CD8-positive, alpha-beta T cell (primary cell): ENCODE measurements at regions of chr11 and their contacts with region 1.

Region 1: GRCh38 chr11:45885274-45885920 is at the start of gene MAPK8IP1:
- DNase-seq: peak; percentile 14 to 76 (median 52)
- ATAC-seq: peak; percentile 85
- H3K4me3 ChIP-seq: peak within 1 kb of the TSS in 1 of 2 experiments; percentile 24
- H3K4me3 Mint-ChIP-seq: peak within 1 kb of the TSS; percentile 61
- H3K27ac ChIP-seq: no peak within 1 kb of the TSS
- H3K27ac Mint-ChIP-seq: no peak within 1 kb of the TSS
- H3K4me1 ChIP-seq: peaks cover 5% of the 10 kb centered on the region
- H3K4me1 Mint-ChIP-seq: peaks cover 10% of the 10 kb centered on the region
- H3K27me3 ChIP-seq: peaks cover 0 to 9% of the 10 kb centered on the region in 2 experiments
- H3K27me3 Mint-ChIP-seq: peaks cover 2% of the 10 kb centered on the region
- CTCF ChIP-seq: no peak
- total RNA-seq, gene MAPK8IP1: 6.5 to 8.4 TPM

Region 2: GRCh38 chr11:45468262-45468856 is 417.0 kb before region 1 on chr11:
- CTCF ChIA-PET with region 1: no interaction called
- POLR2A ChIA-PET with region 1: no interaction called
- intact Hi-C with region 1: no loop called
- DNase-seq: no peak
- ATAC-seq: no peak
- H3K4me3 ChIP-seq: no peak overlapping the region
- H3K4me3 Mint-ChIP-seq: no peak overlapping the region
- H3K27ac ChIP-seq: no peak overlapping the region
- H3K27ac Mint-ChIP-seq: no peak overlapping the region
- H3K4me1 ChIP-seq: no peaks in the 10 kb centered on the region
- H3K4me1 Mint-ChIP-seq: no peaks in the 10 kb centered on the region
- H3K27me3 ChIP-seq: no peaks in the 10 kb centered on the region
- H3K27me3 Mint-ChIP-seq: peaks cover under 1% of the 10 kb centered on the region
- CTCF ChIP-seq: no peak

Region 3: GRCh38 chr11:45804761-45805304 is 80.6 kb before region 1 on chr11 and contains the start of gene SLC35C1:
- CTCF ChIA-PET with region 1: no interaction called
- POLR2A ChIA-PET with region 1: no interaction called
- intact Hi-C with region 1: loop called in 1 of 2 experiments (anchors 1 kb)
- DNase-seq: peak; percentile 89 to 98 (median 97)
- ATAC-seq: peak; percentile 96
- H3K4me3 ChIP-seq: peak within 1 kb of the TSS; percentile 97
- H3K4me3 Mint-ChIP-seq: peak within 1 kb of the TSS; percentile 90
- H3K27ac ChIP-seq: peak within 1 kb of the TSS; percentile 76 to 81
- H3K27ac Mint-ChIP-seq: peak within 1 kb of the TSS; percentile 81
- H3K4me1 ChIP-seq: peaks cover 32% of the 10 kb centered on the region
- H3K4me1 Mint-ChIP-seq: peaks cover 44% of the 10 kb centered on the region
- H3K27me3 ChIP-seq: no peaks in the 10 kb centered on the region
- H3K27me3 Mint-ChIP-seq: no peaks in the 10 kb centered on the region
- CTCF ChIP-seq: no peak
- total RNA-seq, gene SLC35C1: 3.1 to 3.3 TPM

Region 4: GRCh38 chr11:45859661-45860140 is 25.7 kb before region 1 on chr11:
- CTCF ChIA-PET with region 1: no interaction called
- POLR2A ChIA-PET with region 1: no interaction called
- intact Hi-C with region 1: no loop called
- DNase-seq: no peak
- ATAC-seq: no peak
- H3K4me3 ChIP-seq: no peak overlapping the region
- H3K4me3 Mint-ChIP-seq: no peak overlapping the region
- H3K27ac ChIP-seq: no peak overlapping the region
- H3K27ac Mint-ChIP-seq: no peak overlapping the region
- H3K4me1 ChIP-seq: no peaks in the 10 kb centered on the region
- H3K4me1 Mint-ChIP-seq: peaks cover 6% of the 10 kb centered on the region
- H3K27me3 ChIP-seq: no peaks in the 10 kb centered on the region
- H3K27me3 Mint-ChIP-seq: no peaks in the 10 kb centered on the region
- CTCF ChIP-seq: no peak

Region 5: DNA sequence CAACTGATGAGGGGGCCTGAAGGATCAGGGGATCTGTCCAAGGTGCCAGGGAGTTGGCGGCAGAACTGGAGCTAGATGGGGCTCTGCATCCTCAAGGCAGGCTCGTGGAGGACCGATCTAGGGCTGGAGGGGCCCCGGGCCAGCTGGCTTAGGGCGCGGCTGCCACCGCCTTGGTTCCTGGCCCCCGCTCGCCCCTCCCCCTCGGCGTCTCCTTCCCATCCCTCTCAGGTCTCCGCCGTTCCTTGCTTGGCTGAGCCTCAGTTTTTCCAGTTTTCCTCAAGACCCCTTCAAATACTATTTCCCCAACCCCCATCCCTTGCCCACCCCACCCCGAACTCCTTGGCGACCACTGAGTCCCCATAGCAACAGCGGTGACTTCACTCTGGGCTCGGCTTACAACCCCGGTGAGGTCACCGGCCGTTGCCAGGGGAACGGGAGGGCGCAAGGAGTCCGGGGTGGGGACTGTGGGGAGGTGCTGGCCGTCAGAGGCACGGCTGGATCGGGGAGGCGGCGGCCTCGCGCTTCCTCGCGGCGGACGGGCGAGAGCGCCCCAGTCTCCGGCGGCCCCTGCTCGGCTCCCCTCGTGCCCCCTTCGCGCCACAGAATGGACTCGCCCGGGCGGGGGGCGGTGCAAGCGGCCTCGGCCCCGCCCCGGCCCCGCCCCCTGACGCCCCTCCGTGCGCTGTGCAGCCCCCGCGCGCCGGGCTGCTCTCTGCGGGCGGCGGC is 14.2 kb after region 1 on chr11:
- CTCF ChIA-PET with region 1: no interaction called
- POLR2A ChIA-PET with region 1: interaction called, 3 read pairs
- intact Hi-C with region 1: loop called (anchors 1 kb)
- DNase-seq: peak; percentile 31 to 88 (median 63)
- ATAC-seq: peak; percentile 79
- H3K4me3 ChIP-seq: peak overlapping the region; percentile 27 to 53
- H3K4me3 Mint-ChIP-seq: peak overlapping the region; percentile 69
- H3K27ac ChIP-seq: peak overlapping the region in 1 of 2 experiments; percentile 30
- H3K27ac Mint-ChIP-seq: no peak overlapping the region
- H3K4me1 ChIP-seq: peaks cover 9% of the 10 kb centered on the region
- H3K4me1 Mint-ChIP-seq: peaks cover 8% of the 10 kb centered on the region
- H3K27me3 ChIP-seq: peaks cover 6 to 22% of the 10 kb centered on the region in 2 experiments
- H3K27me3 Mint-ChIP-seq: peaks cover 11% of the 10 kb centered on the region
- CTCF ChIP-seq: no peak

Region 6: DNA sequence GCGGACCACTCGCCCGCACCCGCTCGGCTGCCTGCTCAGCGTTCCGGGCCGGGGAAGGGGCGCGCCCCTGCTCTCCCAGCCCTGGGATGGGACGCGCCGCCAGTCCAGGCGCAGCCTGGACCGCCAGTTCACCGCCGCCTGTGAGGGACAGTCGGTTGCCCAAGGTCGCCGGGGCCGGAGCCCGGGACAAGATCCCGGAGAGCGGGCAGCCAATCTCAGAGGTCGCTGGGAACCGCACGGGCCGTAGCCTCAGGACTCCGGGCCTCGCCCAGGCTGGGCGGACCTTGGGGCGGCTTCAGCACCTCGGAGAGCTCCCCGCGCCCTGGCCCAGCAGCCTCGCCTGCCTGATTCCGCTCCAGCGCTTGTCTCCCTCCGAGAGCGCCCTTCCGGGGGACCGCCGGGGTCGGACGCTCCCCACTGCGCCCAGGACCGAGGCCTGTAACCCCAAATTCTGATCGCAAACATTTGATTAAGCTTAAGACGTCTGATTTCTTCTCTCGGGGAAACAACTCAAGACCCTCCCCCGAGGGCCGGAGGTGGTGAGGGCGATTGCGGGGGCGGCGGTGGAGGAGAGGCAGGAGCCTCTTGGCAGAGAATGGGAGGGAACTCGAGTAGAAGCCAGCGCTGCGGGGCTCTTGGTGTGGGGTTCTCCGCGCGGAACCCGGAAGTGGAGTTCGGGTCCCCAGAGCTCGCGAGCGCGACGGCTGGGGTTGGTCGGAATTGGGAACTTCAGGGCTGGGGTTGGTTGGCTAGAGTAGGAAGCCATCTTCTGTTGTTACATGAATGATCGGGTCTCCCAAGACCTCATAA is 507.2 kb after region 1 on chr11:
- CTCF ChIA-PET with region 1: no interaction called
- POLR2A ChIA-PET with region 1: no interaction called
- intact Hi-C with region 1: loop called in 1 of 2 experiments (anchors 5 kb)
- DNase-seq: peak; percentile 59 to 86 (median 76)
- ATAC-seq: peak; percentile 91
- H3K4me3 ChIP-seq: no peak overlapping the region
- H3K4me3 Mint-ChIP-seq: peak overlapping the region; percentile 67
- H3K27ac ChIP-seq: no peak overlapping the region
- H3K27ac Mint-ChIP-seq: no peak overlapping the region
- H3K4me1 ChIP-seq: peaks cover 26% of the 10 kb centered on the region
- H3K4me1 Mint-ChIP-seq: peaks cover 24% of the 10 kb centered on the region
- H3K27me3 ChIP-seq: peaks cover 31 to 33% of the 10 kb centered on the region in 2 experiments
- H3K27me3 Mint-ChIP-seq: peaks cover 36% of the 10 kb centered on the region
- CTCF ChIP-seq: no peak